Activated CD8-positive, alpha-beta T cell treated with anti-CD3 and anti-CD28 coated beads, Interleukin-2, amount 10 ng/mL, durations not matched to agents 7 days and 5 days (primary cell): ENCODE measurements at regions of chr3 and their contacts with region 1.

Region 1: GRCh38 chr3:197002701-197003454 is 26.7 kb downstream of the MELTF start:
- DNase-seq: peak; percentile 71
- ATAC-seq: peak; percentile 85
- H3K4me3 Mint-ChIP-seq: no peak overlapping the region
- H3K27ac Mint-ChIP-seq: no peak overlapping the region
- H3K4me1 Mint-ChIP-seq: peaks cover 12% of the 10 kb centered on the region
- H3K27me3 Mint-ChIP-seq: peaks cover 2% of the 10 kb centered on the region

Region 2: GRCh38 chr3:197186887-197187588 is 184.2 kb after region 1 on chr3:
- CTCF ChIA-PET with region 1: interaction called, 12 read pairs
- POLR2A ChIA-PET with region 1: no interaction called
- DNase-seq: peak; percentile 50
- ATAC-seq: peak; percentile 93
- H3K4me3 Mint-ChIP-seq: no peak overlapping the region
- H3K27ac Mint-ChIP-seq: no peak overlapping the region
- H3K4me1 Mint-ChIP-seq: peaks cover 11% of the 10 kb centered on the region
- H3K27me3 Mint-ChIP-seq: no peaks in the 10 kb centered on the region